ENCODE measurements at regions of chr17 and their contacts with region 1.

Region 1: GRCh38 chr17:45135192-45135977 is at the start of gene ACBD4:
- DNase-seq: peak; percentile 96 to 97 (median 97)
- H3K4me3 ChIP-seq: peak within 1 kb of the TSS; percentile 90 to 92
- H3K4me3 Mint-ChIP-seq: peak within 1 kb of the TSS; percentile 84 to 94 (median 90)
- H3K27ac ChIP-seq: peak within 1 kb of the TSS; percentile 70
- H3K27ac Mint-ChIP-seq: peak within 1 kb of the TSS; percentile 86 to 94 (median 91)
- H3K4me1 ChIP-seq: peaks cover 25% of the 10 kb centered on the region
- H3K4me1 Mint-ChIP-seq: peaks cover 9 to 37% (median 16%) of the 10 kb centered on the region in 4 donors
- H3K27me3 ChIP-seq: no peaks in the 10 kb centered on the region
- H3K27me3 Mint-ChIP-seq: no peaks in the 10 kb centered on the region
- total RNA-seq, gene ACBD4: 41.9 to 48.1 TPM

Region 2: DNA sequence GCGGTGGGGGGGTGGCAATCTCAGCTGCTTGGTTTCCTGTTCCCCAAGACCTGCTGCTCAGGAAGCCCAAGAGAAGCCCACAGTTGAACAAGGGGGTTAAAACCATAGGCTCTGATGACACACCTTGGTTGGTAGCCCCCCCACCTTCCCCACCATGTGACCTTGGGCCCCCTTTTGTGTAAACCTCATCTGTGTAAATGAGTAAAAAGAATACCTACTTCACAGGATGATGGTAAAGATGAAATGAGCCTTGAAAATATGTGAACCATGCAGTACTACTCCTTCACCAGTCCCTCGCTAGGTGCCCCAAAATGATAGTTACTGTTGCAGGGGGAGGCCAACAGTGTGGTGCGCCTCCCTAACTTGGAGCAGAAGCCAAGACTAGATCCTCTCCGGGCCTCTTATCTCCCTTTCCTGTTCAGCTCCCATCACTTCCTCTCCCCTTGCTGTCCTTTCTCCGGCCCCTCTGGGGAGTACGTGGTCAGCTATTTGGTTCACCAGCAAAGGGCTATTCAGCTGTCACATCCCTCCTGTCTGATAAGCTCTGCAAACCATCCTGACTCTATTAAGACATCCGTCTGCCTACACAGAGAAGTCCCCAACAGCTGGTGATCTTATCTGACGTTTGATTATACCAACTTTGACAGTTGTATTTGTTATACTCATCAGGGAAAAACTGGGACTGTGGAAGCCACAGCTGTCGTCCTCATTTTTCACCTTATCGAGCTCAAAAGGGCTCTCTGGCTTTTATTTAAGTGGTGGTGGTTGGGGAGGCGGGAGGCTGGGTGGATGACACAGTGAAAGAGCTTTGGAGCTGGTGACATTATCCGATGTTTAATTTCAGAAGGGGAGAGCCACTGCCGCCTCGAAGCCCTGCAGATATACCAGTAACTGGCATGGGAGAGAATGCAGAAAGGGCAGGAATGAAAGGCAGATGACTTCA is 103.9 kb before region 1 on chr17:
- CTCF ChIA-PET with region 1: no interaction called
- POLR2A ChIA-PET with region 1: no interaction called
- intact Hi-C with region 1: no loop called
- DNase-seq: no peak
- H3K4me3 ChIP-seq: no peak overlapping the region
- H3K4me3 Mint-ChIP-seq: no peak overlapping the region
- H3K27ac ChIP-seq: no peak overlapping the region
- H3K27ac Mint-ChIP-seq: peak overlapping the region in 1 of 7 donors; percentile 53
- H3K4me1 ChIP-seq: no peaks in the 10 kb centered on the region
- H3K4me1 Mint-ChIP-seq: peaks cover 0 to 4% (median under 1%) of the 10 kb centered on the region in 4 donors
- H3K27me3 ChIP-seq: no peaks in the 10 kb centered on the region
- H3K27me3 Mint-ChIP-seq: no peaks in the 10 kb centered on the region

Region 3: DNA sequence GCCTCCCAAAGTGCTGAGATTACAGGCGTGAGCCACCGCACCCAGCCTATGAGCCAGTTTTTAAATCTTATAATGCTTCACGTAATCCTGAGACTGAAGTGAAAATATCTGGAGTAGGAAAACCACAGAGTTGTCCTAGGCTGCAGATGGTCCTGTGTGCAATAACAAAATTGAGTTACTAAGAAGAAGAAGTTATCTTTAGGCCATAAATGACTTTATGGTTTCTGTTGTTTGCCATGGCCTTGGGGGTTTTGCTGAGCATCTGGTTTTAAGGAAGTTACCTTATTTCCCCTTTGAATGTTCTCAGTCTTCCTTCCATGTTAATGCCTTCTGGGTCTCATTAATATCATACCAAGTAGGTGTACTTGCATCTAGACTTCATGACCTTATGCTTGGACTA is 57.7 kb before region 1 on chr17:
- CTCF ChIA-PET with region 1: no interaction called
- POLR2A ChIA-PET with region 1: no interaction called
- intact Hi-C with region 1: no loop called
- DNase-seq: no peak
- H3K4me3 ChIP-seq: no peak overlapping the region
- H3K4me3 Mint-ChIP-seq: no peak overlapping the region
- H3K27ac ChIP-seq: no peak overlapping the region
- H3K27ac Mint-ChIP-seq: peak overlapping the region in 2 of 7 donors; percentile 27 to 60
- H3K4me1 ChIP-seq: no peaks in the 10 kb centered on the region
- H3K4me1 Mint-ChIP-seq: peaks cover 16 to 31% (median 22%) of the 10 kb centered on the region in 4 donors
- H3K27me3 ChIP-seq: no peaks in the 10 kb centered on the region
- H3K27me3 Mint-ChIP-seq: no peaks in the 10 kb centered on the region

Region 4: DNA sequence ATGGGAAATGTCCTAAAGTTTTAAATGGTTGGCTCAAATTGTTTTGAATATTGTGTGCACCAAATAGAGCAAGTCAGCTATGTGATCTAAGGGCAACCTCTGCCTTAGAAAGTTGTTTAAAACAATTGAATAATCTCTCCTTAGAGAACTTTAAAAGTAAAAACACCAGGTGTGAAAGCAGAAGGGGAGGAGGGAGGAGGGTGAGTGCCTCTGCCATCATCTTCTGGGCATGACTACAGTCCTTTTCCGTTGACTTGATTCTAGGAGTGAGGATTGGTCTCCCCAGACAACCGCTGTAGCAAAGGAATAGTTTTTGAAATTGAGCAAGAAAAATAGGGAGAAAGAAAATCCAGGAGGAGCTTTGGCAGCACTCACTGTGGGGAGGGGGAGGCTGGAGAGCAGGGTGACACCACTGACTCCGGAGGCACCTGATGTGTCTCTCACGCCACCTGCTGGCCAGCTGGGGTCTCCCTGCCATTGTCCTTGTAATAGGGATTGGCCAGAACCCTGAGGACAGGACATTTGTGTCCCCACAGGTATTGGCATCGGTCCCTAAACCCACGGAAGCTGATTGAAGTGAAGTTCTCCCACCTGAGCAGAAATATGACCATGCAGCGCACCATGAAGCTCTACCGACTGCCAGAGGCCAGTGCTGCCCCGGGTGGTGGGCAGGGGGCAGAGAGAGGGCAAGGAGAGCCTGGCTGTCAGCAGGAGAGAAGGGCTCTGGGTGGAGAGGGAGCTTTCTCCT is 36.3 kb before region 1 on chr17:
- CTCF ChIA-PET with region 1: interaction called, 10 read pairs
- POLR2A ChIA-PET with region 1: no interaction called
- intact Hi-C with region 1: no loop called
- DNase-seq: peak; percentile 58 to 76 (median 67)
- H3K4me3 ChIP-seq: no peak overlapping the region
- H3K4me3 Mint-ChIP-seq: no peak overlapping the region
- H3K27ac ChIP-seq: no peak overlapping the region
- H3K27ac Mint-ChIP-seq: peak overlapping the region in 3 of 7 donors; percentile 59 to 66 (median 66)
- H3K4me1 ChIP-seq: no peaks in the 10 kb centered on the region
- H3K4me1 Mint-ChIP-seq: no peaks in the 10 kb centered on the region
- H3K27me3 ChIP-seq: no peaks in the 10 kb centered on the region
- H3K27me3 Mint-ChIP-seq: no peaks in the 10 kb centered on the region

Region 5: GRCh38 chr17:45148183-45149036 is 13.0 kb after region 1 on chr17 and contains the start of gene HEXIM1:
- CTCF ChIA-PET with region 1: interaction called, 552 read pairs
- POLR2A ChIA-PET with region 1: interaction called, 243 read pairs
- intact Hi-C with region 1: loop called (anchors 1 kb)
- DNase-seq: peak; percentile 99 to 100 (median 99)
- H3K4me3 ChIP-seq: peak within 1 kb of the TSS; percentile 90 to 95
- H3K4me3 Mint-ChIP-seq: peak within 1 kb of the TSS; percentile 93 to 99 (median 96)
- H3K27ac ChIP-seq: peak within 1 kb of the TSS; percentile 88
- H3K27ac Mint-ChIP-seq: peak within 1 kb of the TSS; percentile 98 to 100 (median 100)
- H3K4me1 ChIP-seq: peaks cover 59% of the 10 kb centered on the region
- H3K4me1 Mint-ChIP-seq: peaks cover 26 to 61% (median 44%) of the 10 kb centered on the region in 4 donors
- H3K27me3 ChIP-seq: no peaks in the 10 kb centered on the region
- H3K27me3 Mint-ChIP-seq: peaks cover 1 to 5% of the 10 kb centered on the region in 2 donors
- total RNA-seq, gene HEXIM1: 28.8 to 30.8 TPM

Region 6: GRCh38 chr17:45190503-45191255 is 55.3 kb after region 1 on chr17:
- CTCF ChIA-PET with region 1: interaction called, 300 read pairs
- POLR2A ChIA-PET with region 1: interaction called, 3 read pairs
- intact Hi-C with region 1: no loop called
- DNase-seq: no peak
- H3K4me3 ChIP-seq: no peak overlapping the region
- H3K4me3 Mint-ChIP-seq: no peak overlapping the region
- H3K27ac ChIP-seq: no peak overlapping the region
- H3K27ac Mint-ChIP-seq: peak overlapping the region in 2 of 7 donors; percentile 13 to 29
- H3K4me1 ChIP-seq: no peaks in the 10 kb centered on the region
- H3K4me1 Mint-ChIP-seq: no peaks in the 10 kb centered on the region
- H3K27me3 ChIP-seq: no peaks in the 10 kb centered on the region
- H3K27me3 Mint-ChIP-seq: no peaks in the 10 kb centered on the region

Region 7: DNA sequence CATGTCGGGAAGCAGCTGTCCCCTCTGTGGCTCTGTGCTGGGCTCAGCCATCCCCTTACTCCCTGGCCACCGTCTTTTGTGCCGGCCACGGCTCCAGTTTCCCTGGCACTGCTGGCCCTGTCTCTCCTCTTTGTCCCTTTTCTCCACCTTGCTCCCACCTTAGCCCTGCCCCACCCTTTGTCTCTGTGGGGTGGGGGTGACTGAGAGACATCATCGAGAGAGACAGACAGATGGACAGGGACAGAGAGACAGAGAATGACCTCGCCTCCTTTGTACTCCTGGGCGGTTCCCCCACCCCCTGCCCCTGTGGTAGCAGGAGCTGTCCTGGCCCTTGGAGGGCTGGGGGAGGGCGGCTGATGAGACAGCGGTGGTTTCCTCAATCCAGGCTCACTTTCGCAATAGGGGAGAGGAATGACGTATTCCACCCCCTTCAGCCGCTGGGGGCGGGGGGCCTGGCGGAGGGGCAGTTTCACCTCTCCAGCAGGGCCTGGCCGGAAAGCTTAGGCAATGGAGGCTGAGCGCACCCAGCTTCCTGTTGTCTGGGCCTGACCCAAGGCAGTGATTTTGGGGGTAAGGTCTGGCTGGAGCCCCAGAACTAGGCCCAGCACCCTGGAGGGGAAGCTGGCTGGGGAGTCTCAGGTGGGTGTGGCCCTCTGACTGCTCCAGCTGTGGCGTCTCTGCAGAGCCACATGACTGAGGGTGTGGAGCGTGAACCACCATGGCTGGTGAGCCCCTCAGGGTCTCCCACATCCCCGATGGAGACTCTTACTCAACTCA is 93.6 kb after region 1 on chr17:
- CTCF ChIA-PET with region 1: interaction called, 12 read pairs
- POLR2A ChIA-PET with region 1: interaction called, 7 read pairs
- intact Hi-C with region 1: no loop called
- DNase-seq: peak; percentile 78 to 97 (median 84)
- H3K4me3 ChIP-seq: peak overlapping the region; percentile 43 to 74
- H3K4me3 Mint-ChIP-seq: peak overlapping the region; percentile 96 to 100 (median 99)
- H3K27ac ChIP-seq: peak overlapping the region; percentile 97
- H3K27ac Mint-ChIP-seq: peak overlapping the region; percentile 99 to 100 (median 100)
- H3K4me1 ChIP-seq: peaks cover 95% of the 10 kb centered on the region
- H3K4me1 Mint-ChIP-seq: peaks cover 48 to 99% (median 69%) of the 10 kb centered on the region in 4 donors
- H3K27me3 ChIP-seq: no peaks in the 10 kb centered on the region
- H3K27me3 Mint-ChIP-seq: no peaks in the 10 kb centered on the region